ENCODE measurements at regions of chr17 and their contacts with region 1.

Region 1: DNA sequence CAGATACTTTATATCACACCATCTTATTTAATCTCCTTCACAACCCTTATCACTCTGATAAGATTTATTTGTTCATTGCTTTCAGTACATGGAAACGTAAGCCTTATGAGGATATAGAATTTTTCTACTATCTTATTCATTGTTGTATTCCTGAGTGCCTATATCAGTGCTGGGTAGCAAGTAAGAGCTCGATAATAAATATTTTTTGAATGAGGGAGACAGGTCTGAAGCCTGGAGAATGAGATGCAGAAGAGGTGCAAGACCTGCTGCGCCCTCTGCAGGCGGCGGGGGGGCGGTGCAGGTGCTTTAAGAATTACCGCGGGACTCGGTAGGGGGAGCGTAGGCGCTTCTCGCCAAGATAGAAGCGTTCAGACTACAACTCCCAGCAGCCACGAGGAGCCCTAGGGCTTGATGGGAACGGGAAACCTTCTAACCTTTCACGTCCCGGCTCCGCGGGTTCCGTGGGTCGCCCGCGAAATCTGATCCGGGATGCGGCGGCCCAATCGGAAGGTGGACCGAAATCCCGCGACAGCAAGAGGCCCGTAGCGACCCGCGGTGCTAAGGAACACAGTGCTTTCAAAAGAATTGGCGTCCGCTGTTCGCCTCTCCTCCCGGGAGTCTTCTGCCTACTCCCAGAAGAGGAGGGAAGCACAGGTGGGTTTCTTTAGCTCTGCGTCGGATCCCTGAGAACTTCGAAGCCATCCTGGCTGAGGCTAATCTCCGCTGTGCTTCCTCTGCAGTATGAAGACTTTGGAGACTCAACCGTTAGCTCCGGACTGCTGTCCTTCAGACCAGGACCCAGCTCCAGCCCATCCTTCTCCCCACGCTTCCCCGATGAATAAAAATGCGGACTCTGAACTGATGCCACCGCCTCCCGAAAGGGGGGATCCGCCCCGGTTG is at the start of gene WRAP53:
- H3K4me3 ChIP-seq: peak within 1 kb of the TSS; percentile 93
- H3K27ac ChIP-seq: peak within 1 kb of the TSS; percentile 96
- H3K4me1 ChIP-seq: peaks cover 13% of the 10 kb centered on the region
- CTCF ChIP-seq: peak; percentile 99

Region 2: DNA sequence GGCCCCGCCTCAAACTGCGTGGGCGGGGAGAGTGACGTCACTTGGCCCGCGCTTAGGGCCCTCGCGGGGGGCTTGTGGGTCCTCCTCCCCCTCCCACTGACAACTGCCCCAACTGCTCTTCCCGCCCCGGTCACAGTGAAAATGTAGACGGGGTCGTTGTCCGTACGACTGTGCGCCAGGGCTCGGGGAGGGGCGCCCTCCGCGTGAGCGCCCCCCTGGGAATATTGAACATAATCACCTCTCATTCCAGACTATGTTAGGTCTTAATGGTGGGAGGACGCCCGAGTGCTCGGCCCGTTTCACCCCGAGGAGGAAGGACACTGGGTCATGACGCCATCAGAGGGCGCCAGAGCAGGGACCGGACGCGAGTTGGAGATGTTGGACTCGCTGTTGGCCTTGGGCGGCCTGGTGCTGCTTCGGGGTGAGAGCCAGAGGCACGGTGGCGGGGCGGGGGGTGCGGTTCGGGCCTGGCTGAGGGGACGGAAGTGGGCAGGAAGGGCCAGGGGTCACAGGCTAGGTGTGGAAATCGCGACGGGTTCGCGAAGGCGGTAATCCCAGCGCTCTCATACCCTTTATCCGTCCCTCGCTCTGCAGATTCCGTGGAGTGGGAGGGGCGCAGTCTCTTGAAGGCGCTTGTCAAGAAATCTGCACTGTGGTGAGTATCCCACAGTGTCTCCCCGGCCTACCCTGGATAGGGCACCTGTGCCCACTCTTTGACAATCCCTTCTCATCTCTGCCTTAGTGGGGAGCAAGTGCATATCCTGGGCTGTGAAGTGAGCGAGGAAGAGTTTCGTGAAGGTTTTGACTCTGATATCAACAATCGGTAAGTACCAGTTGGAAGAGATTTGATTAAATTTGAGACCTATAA is 435.7 kb before region 1 on chr17 and contains the start of gene ELP5:
- CTCF ChIA-PET with region 1: no interaction called
- POLR2A ChIA-PET with region 1: no interaction called
- H3K4me3 ChIP-seq: peak within 1 kb of the TSS; percentile 91
- H3K27ac ChIP-seq: peak within 1 kb of the TSS; percentile 92
- H3K4me1 ChIP-seq: peaks cover 13% of the 10 kb centered on the region; the same call in 1 of the 2 replicates
- CTCF ChIP-seq: peak; percentile 99

Region 3: DNA sequence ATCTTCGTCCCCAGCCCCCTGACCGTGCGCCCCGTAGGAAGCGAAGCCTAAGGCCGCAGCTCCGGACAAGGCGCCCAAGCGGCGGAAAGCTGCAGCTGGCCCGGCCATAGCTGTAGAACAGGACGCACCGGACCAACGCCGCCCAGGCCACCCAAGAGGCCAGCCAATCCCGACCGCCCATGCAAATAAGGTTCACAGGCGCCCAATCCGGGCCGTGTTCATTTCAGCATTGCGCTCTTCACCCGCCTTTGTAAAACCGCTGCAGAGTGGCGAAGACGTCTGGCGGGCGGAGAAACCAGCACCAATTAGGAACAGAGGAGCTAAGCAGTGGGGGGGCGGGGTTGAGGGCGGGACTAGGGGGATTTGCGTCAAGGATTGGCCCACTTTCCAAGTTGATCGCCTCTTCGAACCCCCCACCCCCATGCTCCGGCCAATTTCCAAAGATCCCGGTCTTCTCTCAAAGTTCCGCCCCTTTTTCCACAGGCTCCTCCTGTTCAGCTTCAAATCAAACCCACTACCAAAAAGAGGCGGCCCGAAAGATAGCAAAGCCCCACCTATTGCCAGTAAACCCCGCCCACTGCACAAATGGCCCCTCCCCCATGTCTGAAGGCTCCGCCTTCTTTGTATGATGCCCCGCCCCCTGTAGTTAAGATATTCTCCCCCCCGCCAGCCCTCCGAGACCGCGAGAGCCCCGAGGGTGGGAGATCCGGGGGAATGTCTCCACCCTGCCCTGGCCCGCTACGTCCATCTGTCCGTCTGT is 284.0 kb before region 1 on chr17 and contains the start of gene TMEM256:
- CTCF ChIA-PET with region 1: no interaction called
- POLR2A ChIA-PET with region 1: interaction called, 20 read pairs
- H3K4me3 ChIP-seq: peak within 1 kb of the TSS; percentile 83
- H3K27ac ChIP-seq: peak within 1 kb of the TSS; percentile 81
- H3K4me1 ChIP-seq: peaks cover 8% of the 10 kb centered on the region
- CTCF ChIP-seq: no peak

Region 4: DNA sequence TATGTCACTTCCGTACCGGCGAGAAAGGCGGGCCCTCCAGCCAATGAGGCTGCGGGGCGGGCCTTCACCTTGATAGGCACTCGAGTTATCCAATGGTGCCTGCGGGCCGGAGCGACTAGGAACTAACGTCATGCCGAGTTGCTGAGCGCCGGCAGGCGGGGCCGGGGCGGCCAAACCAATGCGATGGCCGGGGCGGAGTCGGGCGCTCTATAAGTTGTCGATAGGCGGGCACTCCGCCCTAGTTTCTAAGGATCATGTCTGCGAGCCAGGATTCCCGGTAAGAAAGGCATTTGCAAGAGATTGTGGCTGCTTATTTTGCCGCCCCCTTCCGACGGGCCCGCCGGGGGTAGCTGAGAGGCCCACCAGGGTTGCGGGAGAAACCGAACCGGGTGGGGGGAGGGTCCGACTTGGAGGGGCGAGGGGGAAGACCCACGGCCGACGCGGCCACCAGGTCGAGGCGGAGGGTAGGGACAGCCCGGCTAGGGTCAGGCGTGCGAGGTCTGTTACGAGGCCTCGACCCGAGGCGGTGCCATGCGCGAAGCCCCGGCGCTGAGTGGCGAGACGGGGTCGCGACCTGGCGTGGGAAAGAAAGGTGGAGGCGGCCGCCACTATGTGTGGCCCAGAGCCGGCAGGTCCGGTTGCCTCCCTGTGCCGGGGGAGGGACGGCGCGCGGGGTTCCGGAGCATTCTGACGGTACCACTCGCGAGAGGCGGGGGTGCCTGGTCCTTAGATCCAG is 115.4 kb before region 1 on chr17:
- CTCF ChIA-PET with region 1: interaction called, 7 read pairs
- POLR2A ChIA-PET with region 1: interaction called, 79 read pairs
- H3K4me3 ChIP-seq: peak overlapping the region; percentile 97
- H3K27ac ChIP-seq: peak overlapping the region; percentile 98
- H3K4me1 ChIP-seq: peaks cover 5% of the 10 kb centered on the region
- CTCF ChIP-seq: 0 out of 2 replicates have a peak, but pooled peaks have one; percentile 38

Region 5: DNA sequence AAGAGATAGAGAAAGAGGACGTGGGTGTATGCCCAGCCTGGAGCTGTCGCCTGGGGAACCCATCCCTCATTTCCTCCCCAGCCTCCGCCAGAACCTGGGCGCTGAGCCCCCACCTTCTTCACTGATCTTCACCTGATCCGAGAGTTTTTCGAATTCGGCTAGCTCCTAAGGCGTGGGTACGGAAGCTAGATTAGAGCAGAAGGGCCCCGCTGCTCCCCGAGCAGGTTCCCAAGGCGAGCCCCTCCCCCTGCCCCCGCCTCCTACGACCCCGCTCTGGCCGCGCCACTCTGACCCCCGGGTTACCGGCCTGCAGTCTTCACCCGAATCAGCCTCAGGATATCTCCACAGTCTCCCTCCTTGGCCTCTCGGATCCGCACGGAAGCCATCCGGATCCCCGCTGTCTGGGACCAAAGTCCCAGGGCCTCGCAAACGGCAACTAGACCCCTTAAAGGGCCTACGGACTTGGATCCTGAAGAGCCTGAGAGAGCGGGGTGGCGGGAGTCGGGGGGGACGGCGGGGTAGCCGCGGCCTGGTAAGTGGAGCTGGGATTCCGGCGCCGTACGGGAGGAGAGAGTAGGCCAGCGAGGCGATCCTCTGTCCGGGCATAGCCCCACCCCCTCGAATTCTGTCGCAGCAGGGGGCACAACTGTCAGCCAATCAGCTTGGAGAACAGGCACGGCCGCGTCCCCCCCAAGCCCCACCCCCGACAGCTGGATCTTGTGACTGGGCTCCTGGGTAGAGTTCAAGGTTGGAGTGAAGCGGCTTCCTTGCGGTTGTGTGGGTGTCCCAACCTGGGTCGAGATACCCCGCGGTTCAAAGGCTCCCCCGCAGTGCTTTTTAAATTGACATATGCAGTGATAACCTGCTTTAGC is 60.7 kb before region 1 on chr17 and contains the start of gene SAT2:
- CTCF ChIA-PET with region 1: interaction called, 207 read pairs
- POLR2A ChIA-PET with region 1: interaction called, 215 read pairs
- H3K4me3 ChIP-seq: peak within 1 kb of the TSS; percentile 84
- H3K27ac ChIP-seq: peak within 1 kb of the TSS; percentile 91
- H3K4me1 ChIP-seq: peaks cover 3% of the 10 kb centered on the region; the same call in 1 of the 2 replicates
- CTCF ChIP-seq: no peak

Region 6: DNA sequence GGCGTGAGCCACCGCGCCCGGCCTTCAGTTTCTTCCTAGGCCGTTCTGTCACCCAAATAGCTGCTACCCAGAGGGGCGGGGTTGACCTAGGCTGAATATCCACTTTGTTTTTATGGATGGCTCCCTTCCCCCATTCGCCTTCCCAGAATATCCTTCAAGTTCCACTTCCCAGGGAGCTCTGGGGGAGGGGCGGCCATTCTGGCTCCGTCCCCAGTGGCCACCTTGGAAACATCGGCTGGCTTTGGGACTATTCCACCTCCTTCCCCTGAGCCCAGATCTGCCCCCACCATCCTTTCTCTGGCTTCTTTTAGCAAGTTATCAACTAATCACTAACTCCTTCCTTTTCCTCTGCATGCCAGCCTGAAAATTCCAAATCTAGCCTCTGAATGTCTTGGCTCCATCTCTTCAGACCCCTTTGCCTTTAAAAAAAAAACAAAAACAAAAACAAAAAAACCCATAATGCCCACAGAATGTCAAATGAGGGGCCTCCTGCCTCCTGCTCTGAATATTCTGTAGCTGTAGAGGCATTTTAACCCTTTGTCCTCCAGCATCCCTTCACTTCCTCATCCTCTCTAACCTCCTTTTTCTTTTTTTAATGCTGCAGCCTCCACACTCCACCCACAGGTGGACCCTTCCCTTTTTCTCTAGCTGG is 31.1 kb before region 1 on chr17:
- CTCF ChIA-PET with region 1: interaction called, 23 read pairs
- POLR2A ChIA-PET with region 1: interaction called, 113 read pairs
- H3K4me3 ChIP-seq: no peak overlapping the region
- H3K27ac ChIP-seq: peak overlapping the region; percentile 37; the same call in 1 of the 2 replicates
- H3K4me1 ChIP-seq: peaks cover 7% of the 10 kb centered on the region; the same call in 1 of the 2 replicates
- CTCF ChIP-seq: 0 out of 2 replicates have a peak, but pooled peaks have one; percentile 32

Region 7: GRCh38 chr17:7711051-7711755 is 23.0 kb after region 1 on chr17:
- CTCF ChIA-PET with region 1: interaction called, 45 read pairs
- POLR2A ChIA-PET with region 1: interaction called, 111 read pairs
- H3K4me3 ChIP-seq: no peak overlapping the region
- H3K27ac ChIP-seq: no peak overlapping the region
- H3K4me1 ChIP-seq: peaks cover 3% of the 10 kb centered on the region
- CTCF ChIP-seq: peak; percentile 37; the same call in 1 of the 2 replicates

Region 8: DNA sequence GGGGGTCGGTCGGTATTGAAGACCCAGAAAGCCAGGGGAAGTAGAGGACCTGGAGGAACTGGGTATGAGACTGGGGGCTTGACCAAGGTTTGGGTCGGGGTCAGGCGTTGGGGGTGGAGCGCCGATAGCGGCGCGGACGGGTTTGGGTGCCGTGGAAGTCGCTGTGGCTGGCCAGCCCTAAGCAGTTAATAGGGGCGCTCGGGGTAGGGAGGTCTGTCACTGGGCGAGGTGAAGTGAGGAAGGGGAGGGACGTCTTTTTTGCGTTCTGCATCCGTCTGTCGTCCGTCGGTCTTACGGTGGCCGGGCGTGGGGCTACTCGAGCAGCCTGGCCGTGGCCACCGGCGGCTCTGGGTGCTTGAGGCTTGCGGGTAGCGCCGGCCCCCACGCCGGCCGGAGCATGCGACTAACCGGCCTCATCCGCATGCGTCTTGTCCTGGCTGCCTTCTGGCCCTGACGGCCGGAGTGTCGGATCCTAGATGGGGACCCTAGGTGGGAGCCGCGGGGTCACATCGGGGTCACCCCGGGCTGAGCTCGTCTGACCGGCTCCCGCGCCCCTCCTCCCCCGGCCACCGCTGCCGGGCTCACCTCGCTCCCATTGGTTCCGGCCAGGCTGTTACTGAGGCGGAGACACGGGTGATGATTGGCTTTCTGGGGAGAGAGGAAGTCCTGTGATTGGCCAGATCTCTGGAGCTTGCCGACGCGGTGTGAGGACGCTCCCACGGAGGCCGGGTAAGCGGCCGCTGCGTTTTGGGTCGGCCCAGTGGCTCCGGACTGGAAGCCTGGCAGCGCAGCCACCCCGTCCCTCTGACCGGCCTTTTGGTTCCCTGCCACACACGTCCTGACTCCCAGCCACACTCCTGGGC is 156.4 kb after region 1 on chr17:
- CTCF ChIA-PET with region 1: no interaction called
- POLR2A ChIA-PET with region 1: interaction called, 16 read pairs
- H3K4me3 ChIP-seq: peak overlapping the region; percentile 70
- H3K27ac ChIP-seq: peak overlapping the region; percentile 96
- H3K4me1 ChIP-seq: peaks cover 16% of the 10 kb centered on the region
- CTCF ChIP-seq: 0 out of 2 replicates have a peak, but pooled peaks have one; percentile 49